Activated CD4-positive, alpha-beta T cell treated with anti-CD3 and anti-CD28 coated beads for 36 hours (primary cell): ENCODE measurements at regions of chr9 and their contacts with region 1.

Region 1: DNA sequence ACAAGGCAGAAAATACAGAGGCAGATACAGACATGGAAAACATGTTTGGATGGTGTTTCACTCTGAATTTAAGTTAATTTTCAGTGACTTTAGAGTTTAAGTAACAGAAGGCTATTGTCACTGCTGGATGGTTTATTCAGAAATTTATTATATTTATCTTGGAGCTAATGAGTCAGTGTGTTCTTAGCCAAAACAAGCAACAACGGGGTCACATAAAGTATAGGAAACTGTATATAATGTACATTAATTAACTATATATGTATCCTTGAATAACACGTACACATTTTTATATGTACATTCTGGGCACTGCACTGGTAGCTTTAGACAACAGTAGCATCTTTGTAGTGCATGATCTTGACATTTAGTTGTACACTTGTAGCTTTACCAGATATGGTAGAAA is 30.7 kb downstream of the CYLC2 start:
- DNase-seq: no peak
- ATAC-seq: no peak
- H3K4me3 Mint-ChIP-seq: no peak overlapping the region
- H3K27ac Mint-ChIP-seq: no peak overlapping the region
- H3K4me1 Mint-ChIP-seq: no peaks in the 10 kb centered on the region
- H3K27me3 Mint-ChIP-seq: no peaks in the 10 kb centered on the region

Region 2: GRCh38 chr9:102974530-102974929 is 51.3 kb before region 1 on chr9:
- CTCF ChIA-PET with region 1: no interaction called
- POLR2A ChIA-PET with region 1: no interaction called
- intact Hi-C with region 1: no loop called
- DNase-seq: no peak
- ATAC-seq: no peak
- H3K4me3 Mint-ChIP-seq: no peak overlapping the region
- H3K27ac Mint-ChIP-seq: no peak overlapping the region
- H3K4me1 Mint-ChIP-seq: no peaks in the 10 kb centered on the region
- H3K27me3 Mint-ChIP-seq: no peaks in the 10 kb centered on the region

Region 3: DNA sequence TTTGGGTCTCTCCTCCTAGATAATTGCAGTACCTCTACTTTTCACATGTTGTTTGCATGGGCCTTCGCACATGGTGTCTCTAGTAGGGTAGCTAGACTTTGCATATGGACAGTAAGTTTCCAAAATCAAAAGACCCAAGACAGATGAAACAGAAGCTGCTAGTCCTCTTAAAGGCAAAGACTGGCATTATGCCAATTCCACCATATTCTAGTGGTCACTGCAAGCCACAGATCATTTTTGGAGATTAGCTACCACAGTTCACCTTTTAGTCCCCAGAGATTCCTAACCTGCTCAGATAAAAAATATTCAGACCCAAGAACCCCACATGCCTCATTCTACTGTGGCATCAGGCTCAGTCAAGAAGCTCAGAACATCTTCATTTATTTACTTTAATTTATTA is 476.2 kb after region 1 on chr9:
- CTCF ChIA-PET with region 1: no interaction called
- POLR2A ChIA-PET with region 1: interaction called, 10 read pairs
- intact Hi-C with region 1: no loop called
- DNase-seq: no peak
- ATAC-seq: no peak
- H3K4me3 Mint-ChIP-seq: no peak overlapping the region
- H3K27ac Mint-ChIP-seq: no peak overlapping the region
- H3K4me1 Mint-ChIP-seq: no peaks in the 10 kb centered on the region
- H3K27me3 Mint-ChIP-seq: no peaks in the 10 kb centered on the region